ENCODE measurements at regions of chr11 and their contacts with region 1.

Region 1: GRCh38 chr11:68839054-68839865 is 2.5 kb downstream of the CPT1A start:
- DNase-seq: peak; percentile 72 to 98
- H3K4me3 ChIP-seq: peak overlapping the region; percentile 87 to 94
- H3K27ac ChIP-seq: peak overlapping the region; percentile 95
- H3K4me1 ChIP-seq: peaks cover 19 to 68% of the 10 kb centered on the region in 2 donors
- H3K27me3 ChIP-seq: no peaks in the 10 kb centered on the region
- CTCF ChIP-seq: peak in 1 of 3 experiments; percentile 9

Region 2: DNA sequence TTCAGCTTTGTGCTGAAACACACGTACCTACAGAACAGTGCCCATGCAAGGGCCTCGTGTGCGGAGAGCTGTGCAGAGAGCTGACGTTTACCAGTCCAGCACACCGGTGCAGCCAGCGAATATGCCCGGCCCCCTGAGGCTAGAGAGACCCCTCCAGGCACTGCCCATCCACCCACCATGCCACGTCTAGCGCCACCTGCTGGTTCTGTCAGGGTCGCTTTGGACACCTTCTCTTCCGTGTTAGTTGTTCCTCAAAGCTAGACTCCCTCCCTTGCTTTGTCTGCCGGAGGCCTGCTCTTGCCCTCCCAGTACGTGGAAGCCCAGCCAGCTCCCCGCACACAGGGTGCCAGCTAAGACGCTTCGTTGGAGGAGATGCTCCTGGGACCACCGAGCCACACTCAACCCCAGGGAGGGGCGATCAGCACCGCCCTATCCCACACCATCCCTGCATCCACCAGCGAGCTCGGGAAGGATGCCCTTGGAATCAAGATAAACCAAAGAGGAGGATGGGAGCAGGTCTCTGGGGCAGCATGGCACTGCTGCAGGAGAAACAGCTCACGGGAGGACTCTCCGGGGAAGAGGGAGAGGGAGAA is 40.9 kb before region 1 on chr11:
- intact Hi-C with region 1: loop called (anchors 2 kb)
- DNase-seq: no peak
- H3K4me3 ChIP-seq: no peak overlapping the region
- H3K27ac ChIP-seq: no peak overlapping the region
- H3K4me1 ChIP-seq: no peaks in the 10 kb centered on the region
- H3K27me3 ChIP-seq: no peaks in the 10 kb centered on the region
- CTCF ChIP-seq: peak; percentile 18 to 51 (median 48)

Region 3: GRCh38 chr11:68870470-68870869 is 31.2 kb after region 1 on chr11:
- intact Hi-C with region 1: loop called (anchors 2 kb)
- DNase-seq: no peak
- H3K4me3 ChIP-seq: peak overlapping the region; percentile 45 to 64
- H3K27ac ChIP-seq: peak overlapping the region; percentile 65 to 78
- H3K4me1 ChIP-seq: peaks cover 9 to 49% of the 10 kb centered on the region in 2 donors
- H3K27me3 ChIP-seq: no peaks in the 10 kb centered on the region
- CTCF ChIP-seq: peak in 1 of 3 experiments; percentile 25

Region 4: DNA sequence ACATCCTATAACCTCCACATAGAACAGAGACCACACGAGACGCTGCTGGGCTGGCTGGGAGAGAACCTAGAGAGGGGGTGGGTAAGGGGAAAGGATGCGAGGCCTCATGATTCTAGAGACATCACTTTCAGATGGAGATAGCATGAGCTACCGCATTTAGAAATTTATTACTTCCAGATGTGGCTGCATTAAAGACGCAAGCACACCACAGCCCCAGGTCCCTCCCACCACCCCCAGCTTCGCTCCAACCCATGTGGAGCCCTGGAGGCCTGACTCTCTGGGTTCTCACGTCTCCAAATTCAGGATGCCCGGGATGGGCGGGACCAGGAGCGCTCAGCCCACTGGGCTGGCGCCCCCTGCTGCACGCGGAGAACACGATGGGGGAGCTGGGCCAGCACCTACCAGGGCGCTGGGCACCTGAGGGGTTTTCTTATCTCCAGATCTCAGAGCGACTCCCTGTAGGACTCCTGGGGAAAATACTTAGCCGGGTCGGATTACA is 50.7 kb after region 1 on chr11:
- intact Hi-C with region 1: loop called (anchors 2 kb)
- DNase-seq: peak in 1 of 2 donors; percentile 79
- H3K4me3 ChIP-seq: no peak overlapping the region
- H3K27ac ChIP-seq: peak overlapping the region; percentile 61 to 82
- H3K4me1 ChIP-seq: peaks cover 14 to 16% of the 10 kb centered on the region in 2 donors
- H3K27me3 ChIP-seq: no peaks in the 10 kb centered on the region
- CTCF ChIP-seq: peak; percentile 68 to 75 (median 72)

Region 5: DNA sequence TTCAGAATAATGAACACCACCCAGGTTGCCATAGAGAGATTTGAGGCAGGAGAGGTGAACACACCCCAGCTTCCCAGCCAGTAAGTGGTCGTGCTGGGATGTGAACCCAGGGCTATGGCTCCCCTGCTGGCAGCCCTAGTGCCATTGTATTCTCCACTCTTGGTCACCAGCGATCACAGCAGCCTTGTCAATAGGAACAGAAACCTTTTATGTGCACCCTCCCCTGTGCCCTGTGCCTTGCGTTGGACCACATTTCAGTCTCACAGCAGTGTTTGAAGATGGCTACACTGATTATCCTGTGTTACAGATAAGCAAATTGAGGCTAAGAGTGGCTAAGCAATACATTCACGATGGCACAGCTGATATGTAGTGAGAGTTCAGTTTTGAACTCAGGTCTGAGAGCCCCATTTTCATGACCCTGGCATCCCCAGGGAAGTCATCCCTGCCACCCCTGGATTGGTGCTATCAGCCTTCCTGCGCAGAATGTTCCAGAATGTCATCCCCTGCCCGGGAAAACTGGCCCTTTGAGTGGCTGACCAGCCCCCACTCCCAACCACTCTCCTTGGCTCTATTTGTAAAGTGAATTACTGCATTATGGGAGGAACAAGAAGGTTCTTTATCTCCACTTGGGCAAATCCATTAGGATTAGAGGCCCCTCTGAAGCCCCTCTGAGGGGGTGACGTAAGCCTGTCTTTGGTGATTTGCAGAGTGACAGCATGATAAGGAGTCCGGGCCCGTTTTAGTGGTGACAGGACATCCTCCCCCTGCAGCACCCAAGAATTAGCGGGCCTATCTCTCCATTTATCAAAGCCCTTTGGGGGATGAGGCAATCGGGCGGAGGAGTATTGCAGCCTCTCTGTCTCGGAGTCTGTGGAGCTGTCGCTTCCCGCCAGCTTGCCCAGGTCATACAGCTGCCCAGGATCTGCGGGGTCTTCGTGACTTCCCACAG is 347.3 kb after region 1 on chr11:
- intact Hi-C with region 1: no loop called
- DNase-seq: no peak
- H3K4me3 ChIP-seq: no peak overlapping the region
- H3K27ac ChIP-seq: no peak overlapping the region
- H3K4me1 ChIP-seq: no peaks in the 10 kb centered on the region
- H3K27me3 ChIP-seq: no peaks in the 10 kb centered on the region
- CTCF ChIP-seq: no peak

Measured in ascending aorta (tissue), 2 donors.